SK-N-SH (cell line): ENCODE measurements at regions of chr18 and their contacts with region 1.

Region 1: GRCh38 chr18:54679318-54680149 is 88.5 kb downstream of the DYNAP start:
- DNase-seq: peak; percentile 67
- H3K4me3 ChIP-seq: no peak overlapping the region
- H3K27ac ChIP-seq: peak overlapping the region in 1 of 2 experiments; percentile 50; a peak in 2 of 4 replicates
- H3K4me1 ChIP-seq: peaks cover 4 to 6% of the 10 kb centered on the region in 2 experiments; a peak in 2 of 4 replicates
- H3K27me3 ChIP-seq: no peaks in the 10 kb centered on the region
- CTCF ChIP-seq: peak; percentile 79
- EP300 ChIP-seq: no peak; a peak in 1 of 4 replicates
- RAD21 ChIP-seq: peak; percentile 99

Region 2: GRCh38 chr18:54950221-54950620 is 270.7 kb after region 1 on chr18:
- CTCF ChIA-PET with region 1: interaction called, 11 read pairs
- POLR2A ChIA-PET with region 1: no interaction called
- DNase-seq: no peak
- H3K4me3 ChIP-seq: no peak overlapping the region
- H3K27ac ChIP-seq: no peak overlapping the region
- H3K4me1 ChIP-seq: peaks cover 0 to 10% of the 10 kb centered on the region in 2 experiments; a peak in 1 of 4 replicates
- H3K27me3 ChIP-seq: no peaks in the 10 kb centered on the region
- CTCF ChIP-seq: peak; percentile 39
- EP300 ChIP-seq: no peak
- RAD21 ChIP-seq: peak; percentile 70